ENCODE measurements at regions of chr19 and their contacts with region 1.

Region 1: DNA sequence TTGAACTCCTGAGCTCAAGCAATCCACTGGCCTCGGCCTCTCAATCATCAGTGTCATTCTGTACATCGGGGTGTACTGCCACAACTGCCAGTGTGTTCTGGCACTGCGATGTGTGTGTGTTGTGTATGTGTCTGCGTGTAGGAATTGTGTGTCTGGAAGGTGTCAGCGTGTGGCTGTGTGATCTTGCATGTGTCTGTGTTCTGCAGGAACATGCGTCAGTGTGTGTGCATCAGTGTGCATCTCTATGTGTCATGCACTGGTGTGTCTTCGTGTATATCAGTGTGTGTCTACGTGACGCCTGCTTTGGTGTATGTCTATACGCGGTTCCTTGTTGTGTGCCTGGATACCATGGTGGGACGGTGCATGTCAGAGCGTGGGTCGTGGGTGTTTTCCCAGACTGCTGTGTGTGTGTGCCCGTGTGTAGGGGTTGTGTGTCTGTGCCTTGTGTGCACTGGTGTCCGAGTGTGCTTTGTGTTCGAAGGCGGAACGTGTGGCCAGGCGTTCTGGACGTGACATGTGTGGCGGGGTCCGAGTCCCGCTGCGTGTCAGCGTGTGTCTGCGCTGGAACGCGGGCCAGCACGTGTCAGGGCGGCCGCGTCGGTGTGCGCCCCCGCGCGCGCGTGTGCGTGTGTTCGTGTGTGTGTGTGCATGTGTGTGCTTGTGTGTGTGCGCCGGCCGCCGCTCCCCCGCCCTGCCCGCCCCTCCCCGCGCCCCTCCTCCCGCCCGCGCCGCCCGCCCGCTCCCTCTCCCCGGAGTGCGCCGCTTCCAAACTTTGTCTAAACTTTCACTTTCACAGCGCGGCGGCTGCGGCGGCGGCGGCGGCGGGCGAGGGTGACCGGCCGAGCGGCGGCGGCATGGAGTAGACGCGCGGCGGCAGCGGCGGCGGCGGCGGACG is at the start of gene NFIX:
- DNase-seq: peak; percentile 77 to 78
- ATAC-seq: peak; percentile 15 to 65 (median 33)
- H3K4me3 ChIP-seq: peak within 1 kb of the TSS; percentile 70 to 95 (median 87)
- H3K27ac ChIP-seq: peak within 1 kb of the TSS; percentile 85 to 95 (median 92)
- H3K4me1 ChIP-seq: peaks cover 9 to 26% (median 19%) of the 10 kb centered on the region in 9 donors
- H3K27me3 ChIP-seq: peaks cover 0 to 11% (median 0%) of the 10 kb centered on the region in 7 donors
- CTCF ChIP-seq: no peak
- total RNA-seq, gene NFIX: 111 to 162 (median 145) TPM

Region 2: GRCh38 chr19:13015361-13016223 is 20.6 kb after region 1 on chr19:
- intact Hi-C with region 1: loop called in 1 of 10 experiments (anchors 2 kb)
- DNase-seq: peak in 1 of 2 donors; percentile 5
- ATAC-seq: no peak
- H3K4me3 ChIP-seq: peak overlapping the region in 2 of 10 donors; percentile 42 to 49
- H3K27ac ChIP-seq: peak overlapping the region in 9 of 10 donors; percentile 8 to 96 (median 78)
- H3K4me1 ChIP-seq: peaks cover 53 to 100% (median 87%) of the 10 kb centered on the region in 9 donors
- H3K27me3 ChIP-seq: peaks cover 0 to 49% (median 0%) of the 10 kb centered on the region in 7 donors
- CTCF ChIP-seq: no peak

Region 3: DNA sequence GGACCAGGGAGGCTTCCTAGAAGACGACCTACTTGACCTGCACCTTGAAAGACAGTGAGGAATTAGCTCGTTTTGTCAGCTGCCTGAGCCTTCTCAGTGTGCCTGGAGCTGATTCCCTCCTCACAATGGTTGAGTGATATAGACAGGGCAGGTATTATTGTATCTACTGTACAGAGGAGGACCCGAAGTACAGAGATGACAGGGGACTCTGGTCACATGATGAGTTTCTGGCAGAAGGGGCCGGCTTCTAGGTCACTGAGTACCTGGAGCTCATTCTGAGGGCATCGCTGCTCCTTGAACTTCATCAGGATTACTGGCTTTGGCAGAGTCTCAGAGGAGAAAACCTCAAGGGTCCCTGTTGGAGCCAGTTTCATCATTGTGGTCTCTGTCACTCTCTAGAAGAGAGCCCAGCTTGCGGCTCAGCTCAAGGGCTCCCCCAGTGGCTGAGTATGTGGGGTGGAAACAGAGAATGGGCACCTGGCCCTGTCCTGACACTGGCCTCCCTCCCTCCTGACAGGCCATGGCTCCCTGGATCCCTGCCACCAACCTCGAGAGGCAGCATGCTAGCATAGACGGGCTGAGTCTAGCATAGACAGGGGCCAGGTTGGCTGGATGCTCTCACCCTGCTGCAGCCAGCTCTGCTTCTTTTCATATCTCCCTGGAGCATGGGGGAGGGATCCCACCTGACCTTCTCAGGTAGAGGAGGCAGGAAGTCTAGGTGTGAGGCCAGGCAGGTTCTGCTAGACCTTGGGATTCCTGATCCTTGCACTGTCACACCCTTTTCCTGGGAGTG is 39.1 kb after region 1 on chr19:
- intact Hi-C with region 1: loop called in 4 of 10 experiments (anchors 5 kb)
- DNase-seq: peak; percentile 85
- ATAC-seq: peak; percentile 50 to 73 (median 58)
- H3K4me3 ChIP-seq: no peak overlapping the region
- H3K27ac ChIP-seq: peak overlapping the region in 9 of 10 donors; percentile 24 to 96 (median 79)
- H3K4me1 ChIP-seq: peaks cover 56 to 100% (median 92%) of the 10 kb centered on the region in 9 donors
- H3K27me3 ChIP-seq: no peaks in the 10 kb centered on the region
- CTCF ChIP-seq: peak; percentile 58 to 86 (median 82)

Region 4: GRCh38 chr19:13051267-13052165 is 56.6 kb after region 1 on chr19:
- intact Hi-C with region 1: loop called in 1 of 10 experiments (anchors 10 kb)
- DNase-seq: peak in 1 of 2 donors; percentile 67
- ATAC-seq: peak in 4 of 8 donors; percentile 8 to 28 (median 16)
- H3K4me3 ChIP-seq: peak overlapping the region in 5 of 10 donors; percentile 8 to 24 (median 15)
- H3K27ac ChIP-seq: peak overlapping the region in 8 of 10 donors; percentile 80 to 99 (median 98)
- H3K4me1 ChIP-seq: peaks cover 60 to 92% (median 87%) of the 10 kb centered on the region in 9 donors
- H3K27me3 ChIP-seq: peaks cover 0 to 6% (median 0%) of the 10 kb centered on the region in 7 donors
- CTCF ChIP-seq: peak in 1 of 9 donors; percentile 20

Region 5: GRCh38 chr19:13060964-13061927 is 66.3 kb after region 1 on chr19:
- intact Hi-C with region 1: loop called in 4 of 10 experiments (anchors 5 to 10 kb)
- DNase-seq: peak; percentile 89 to 91
- ATAC-seq: peak; percentile 70 to 87 (median 78)
- H3K4me3 ChIP-seq: peak overlapping the region in 9 of 10 donors; percentile 33 to 56 (median 49)
- H3K27ac ChIP-seq: peak overlapping the region; percentile 67 to 99 (median 96)
- H3K4me1 ChIP-seq: peaks cover 75 to 100% (median 100%) of the 10 kb centered on the region in 9 donors
- H3K27me3 ChIP-seq: no peaks in the 10 kb centered on the region
- CTCF ChIP-seq: peak; percentile 95 to 99 (median 98)

Region 6: GRCh38 chr19:13079542-13079986 is 84.6 kb after region 1 on chr19:
- intact Hi-C with region 1: loop called in 2 of 10 experiments (anchors 5 kb)
- DNase-seq: peak in 1 of 2 donors; percentile 71
- ATAC-seq: peak; percentile 27 to 75 (median 57)
- H3K4me3 ChIP-seq: peak overlapping the region in 1 of 10 donors; percentile 7
- H3K27ac ChIP-seq: peak overlapping the region; percentile 53 to 87 (median 76)
- H3K4me1 ChIP-seq: peaks cover 36 to 74% (median 48%) of the 10 kb centered on the region in 9 donors
- H3K27me3 ChIP-seq: no peaks in the 10 kb centered on the region
- CTCF ChIP-seq: peak in 1 of 9 donors; percentile 22

Region 7: DNA sequence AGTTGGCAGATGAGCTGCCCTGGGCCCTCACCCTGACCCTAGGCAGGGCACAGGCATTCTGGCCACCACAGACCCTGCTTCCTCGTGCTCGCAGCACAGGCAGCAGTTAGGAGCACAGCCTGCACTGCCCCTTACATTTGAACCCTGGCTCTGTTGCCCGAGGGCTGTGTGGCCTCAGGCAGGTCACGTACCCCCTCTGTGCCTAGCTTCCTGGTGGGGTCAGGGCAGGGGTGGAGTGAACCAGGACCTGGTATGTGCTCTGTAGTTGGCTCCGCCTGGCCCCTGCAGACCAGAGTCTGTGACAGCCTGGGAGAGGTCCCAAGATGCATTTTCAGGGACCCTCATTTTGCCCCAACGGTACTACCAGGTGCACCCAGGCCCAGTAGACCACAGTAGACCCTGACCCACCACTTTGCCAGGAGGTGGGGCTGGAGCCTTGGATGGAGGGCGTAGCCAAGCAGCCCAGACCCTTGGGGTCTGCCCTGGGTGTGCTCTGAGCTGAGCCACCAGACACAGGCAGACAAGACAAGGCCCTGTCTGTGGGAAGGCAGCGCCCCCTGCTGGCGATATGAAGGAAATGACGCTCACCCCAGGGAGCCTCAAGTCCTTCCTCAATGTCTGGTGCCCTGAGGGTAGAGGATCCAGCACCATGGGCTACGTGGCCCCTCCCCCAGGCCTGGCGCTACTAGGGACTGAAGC is 98.6 kb after region 1 on chr19:
- intact Hi-C with region 1: loop called in 1 of 10 experiments (anchors 5 kb)
- DNase-seq: peak; percentile 83
- ATAC-seq: peak; percentile 57 to 80 (median 67)
- H3K4me3 ChIP-seq: no peak overlapping the region
- H3K27ac ChIP-seq: peak overlapping the region; percentile 43 to 96 (median 90)
- H3K4me1 ChIP-seq: peaks cover 43 to 96% (median 83%) of the 10 kb centered on the region in 9 donors
- H3K27me3 ChIP-seq: no peaks in the 10 kb centered on the region
- CTCF ChIP-seq: peak; percentile 94 to 98 (median 96)

Measured in heart right ventricle (tissue), 16 donors.